Ascending aorta (tissue), 2 donors: ENCODE measurements at regions of chr9 and their contacts with region 1.

Region 1: GRCh38 chr9:120875954-120876841 is 790 bp downstream of the PHF19 start:
- DNase-seq: peak; percentile 73 to 96
- H3K4me3 ChIP-seq: peak overlapping the region; percentile 80 to 91
- H3K27ac ChIP-seq: peak overlapping the region; percentile 96 to 99
- H3K4me1 ChIP-seq: peaks cover 4 to 11% of the 10 kb centered on the region in 2 donors
- H3K27me3 ChIP-seq: no peaks in the 10 kb centered on the region
- CTCF ChIP-seq: no peak

Region 2: DNA sequence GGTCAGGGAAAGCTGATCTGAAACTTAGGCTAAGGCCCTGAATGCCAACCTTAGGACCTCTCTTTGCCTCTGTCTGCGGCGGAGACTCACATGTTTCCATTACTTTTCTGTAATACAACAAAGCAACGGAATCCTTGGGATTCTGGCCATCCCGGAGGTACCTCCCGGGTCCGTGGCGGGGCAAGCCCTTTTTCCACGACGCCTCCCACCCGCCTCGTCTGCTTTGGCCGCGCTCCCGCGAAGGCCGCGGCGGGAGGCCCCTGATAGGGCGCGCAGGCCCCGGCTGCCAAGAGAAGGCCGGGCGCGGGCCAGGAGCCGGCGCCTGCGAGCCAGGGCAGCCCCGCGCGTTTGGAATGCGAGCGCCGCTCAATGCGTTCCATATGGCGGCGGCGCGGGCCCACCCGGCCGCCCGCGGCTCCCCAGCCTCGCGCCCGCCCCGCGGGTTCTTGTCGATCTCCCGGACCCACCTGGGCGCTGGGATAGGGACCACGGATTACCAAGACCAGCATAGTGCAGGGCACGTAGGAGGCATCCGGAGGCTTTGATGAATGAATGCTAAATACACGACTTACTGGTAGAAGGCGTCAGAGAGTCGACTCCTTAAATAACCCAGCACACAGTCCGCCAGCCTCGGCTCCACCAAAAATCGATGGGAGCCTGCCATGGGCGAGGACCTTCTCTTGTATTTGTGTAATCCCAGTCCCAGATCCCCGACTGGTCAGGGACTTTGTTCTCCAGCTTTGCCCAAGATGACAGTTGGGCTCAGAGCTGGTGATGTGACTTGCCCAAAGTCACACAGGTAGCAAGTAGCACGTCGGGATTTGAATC is 18.3 kb after region 1 on chr9:
- intact Hi-C with region 1: loop called (anchors 1 kb)
- DNase-seq: peak in 1 of 2 donors; percentile 78
- H3K4me3 ChIP-seq: peak overlapping the region; percentile 32 to 53
- H3K27ac ChIP-seq: peak overlapping the region; percentile 90
- H3K4me1 ChIP-seq: peaks cover 7 to 39% of the 10 kb centered on the region in 2 donors
- H3K27me3 ChIP-seq: no peaks in the 10 kb centered on the region
- CTCF ChIP-seq: no peak

Region 3: GRCh38 chr9:121059998-121060636 is 183.9 kb after region 1 on chr9:
- intact Hi-C with region 1: no loop called
- DNase-seq: no peak
- H3K4me3 ChIP-seq: no peak overlapping the region
- H3K27ac ChIP-seq: no peak overlapping the region
- H3K4me1 ChIP-seq: no peaks in the 10 kb centered on the region
- H3K27me3 ChIP-seq: no peaks in the 10 kb centered on the region
- CTCF ChIP-seq: peak; percentile 54 to 75 (median 73)